Activated naive CD4-positive, alpha-beta T cell treated with anti-CD3 and anti-CD28 coated beads for 36 hours (primary cell): ENCODE measurements at regions of chr1 and their contacts with region 1.

Region 1: GRCh38 chr1:226863446-226863845 is 7.0 kb upstream of the PSEN2 start:
- DNase-seq: peak; percentile 27
- H3K4me3 Mint-ChIP-seq: no peak overlapping the region
- H3K27ac Mint-ChIP-seq: no peak overlapping the region
- H3K4me1 Mint-ChIP-seq: peaks cover 11% of the 10 kb centered on the region
- H3K27me3 Mint-ChIP-seq: peaks cover 4% of the 10 kb centered on the region

Region 2: DNA sequence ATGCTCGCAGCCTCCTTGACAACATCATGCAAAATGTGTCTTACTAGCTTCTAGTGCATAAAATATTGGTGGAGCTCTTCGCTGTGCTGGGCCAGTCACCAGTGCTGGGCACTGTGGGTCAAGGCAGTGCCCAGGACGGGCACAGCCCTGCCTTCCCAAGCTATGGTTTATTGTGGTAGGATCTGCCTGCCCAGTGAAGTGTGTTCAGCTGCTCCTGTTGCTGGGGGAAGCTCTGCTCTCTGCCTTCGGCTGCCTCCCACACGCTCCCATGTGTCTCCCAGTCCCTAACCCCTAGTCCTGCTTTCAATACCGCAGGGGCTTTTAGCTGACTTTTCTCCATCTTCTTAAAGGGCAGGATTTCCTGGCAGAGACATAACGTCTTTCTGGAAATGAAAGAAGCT is 1037.8 kb before region 1 on chr1:
- CTCF ChIA-PET with region 1: no interaction called
- intact Hi-C with region 1: loop called (anchors 10 kb)
- DNase-seq: no peak
- H3K4me3 Mint-ChIP-seq: no peak overlapping the region
- H3K27ac Mint-ChIP-seq: no peak overlapping the region
- H3K4me1 Mint-ChIP-seq: no peaks in the 10 kb centered on the region
- H3K27me3 Mint-ChIP-seq: no peaks in the 10 kb centered on the region

Region 3: GRCh38 chr1:226814751-226815496 is 48.5 kb before region 1 on chr1:
- CTCF ChIA-PET with region 1: no interaction called
- intact Hi-C with region 1: no loop called
- DNase-seq: no peak
- H3K4me3 Mint-ChIP-seq: no peak overlapping the region
- H3K27ac Mint-ChIP-seq: no peak overlapping the region
- H3K4me1 Mint-ChIP-seq: peaks cover 8% of the 10 kb centered on the region
- H3K27me3 Mint-ChIP-seq: no peaks in the 10 kb centered on the region